ENCODE measurements at regions of chr5 and their contacts with region 1.

Region 1: DNA sequence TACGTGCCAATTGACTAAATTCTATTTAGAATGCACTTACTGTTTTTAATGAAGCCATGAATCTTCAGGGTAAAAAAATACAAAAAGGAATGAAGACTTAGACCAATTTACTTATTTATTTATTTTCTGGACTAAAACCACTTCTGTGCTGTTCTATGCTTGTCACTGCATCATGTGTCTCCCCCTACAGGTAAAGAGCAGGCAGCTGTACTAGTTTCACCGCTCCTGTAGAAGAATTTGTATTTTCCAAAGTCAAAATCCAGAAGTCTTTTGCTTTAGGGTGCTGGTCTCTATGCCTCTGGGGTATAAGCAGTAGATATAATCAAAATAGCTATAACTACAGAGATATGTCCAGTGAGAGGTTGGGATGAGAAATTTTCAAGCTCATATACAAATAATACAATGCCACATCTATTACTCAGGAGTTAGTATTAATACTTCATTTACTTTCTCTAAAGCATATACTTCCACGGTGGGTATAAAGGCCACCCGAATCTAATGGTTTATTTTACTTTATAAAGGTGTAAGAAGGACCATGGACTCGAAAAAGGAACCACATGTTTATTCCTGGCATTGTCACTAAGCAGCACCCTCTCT is 591.5 kb downstream of the RAB3C start:
- DNase-seq: no peak
- ATAC-seq: peak; percentile 76 to 91
- H3K4me3 ChIP-seq: no peak overlapping the region
- H3K27ac ChIP-seq: no peak overlapping the region
- H3K4me1 ChIP-seq: no peaks in the 10 kb centered on the region
- H3K27me3 ChIP-seq: no peaks in the 10 kb centered on the region
- CTCF ChIP-seq: peak; percentile 75

Region 2: DNA sequence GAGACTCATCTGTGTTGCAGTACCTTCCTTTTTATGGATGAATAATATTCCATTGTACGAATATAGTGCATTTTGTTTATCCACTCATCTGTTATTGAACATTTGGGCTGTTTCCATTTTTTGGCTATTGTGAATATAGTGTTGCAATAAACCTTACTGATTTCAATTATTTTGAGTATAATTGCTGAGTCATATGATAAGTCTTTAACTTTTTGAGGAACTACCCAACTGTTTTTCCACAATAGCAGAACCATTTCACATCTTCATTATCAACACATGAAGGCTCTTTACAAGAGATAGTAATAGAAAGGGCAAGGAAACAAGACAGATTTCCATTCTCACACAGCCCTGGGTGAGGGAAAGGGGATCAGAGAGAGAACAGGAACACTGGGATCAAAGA is 262.2 kb before region 1 on chr5:
- intact Hi-C with region 1: no loop called
- DNase-seq: no peak
- ATAC-seq: no peak
- H3K4me3 ChIP-seq: no peak overlapping the region
- H3K27ac ChIP-seq: no peak overlapping the region
- H3K4me1 ChIP-seq: no peaks in the 10 kb centered on the region
- H3K27me3 ChIP-seq: no peaks in the 10 kb centered on the region
- CTCF ChIP-seq: no peak

Region 3: DNA sequence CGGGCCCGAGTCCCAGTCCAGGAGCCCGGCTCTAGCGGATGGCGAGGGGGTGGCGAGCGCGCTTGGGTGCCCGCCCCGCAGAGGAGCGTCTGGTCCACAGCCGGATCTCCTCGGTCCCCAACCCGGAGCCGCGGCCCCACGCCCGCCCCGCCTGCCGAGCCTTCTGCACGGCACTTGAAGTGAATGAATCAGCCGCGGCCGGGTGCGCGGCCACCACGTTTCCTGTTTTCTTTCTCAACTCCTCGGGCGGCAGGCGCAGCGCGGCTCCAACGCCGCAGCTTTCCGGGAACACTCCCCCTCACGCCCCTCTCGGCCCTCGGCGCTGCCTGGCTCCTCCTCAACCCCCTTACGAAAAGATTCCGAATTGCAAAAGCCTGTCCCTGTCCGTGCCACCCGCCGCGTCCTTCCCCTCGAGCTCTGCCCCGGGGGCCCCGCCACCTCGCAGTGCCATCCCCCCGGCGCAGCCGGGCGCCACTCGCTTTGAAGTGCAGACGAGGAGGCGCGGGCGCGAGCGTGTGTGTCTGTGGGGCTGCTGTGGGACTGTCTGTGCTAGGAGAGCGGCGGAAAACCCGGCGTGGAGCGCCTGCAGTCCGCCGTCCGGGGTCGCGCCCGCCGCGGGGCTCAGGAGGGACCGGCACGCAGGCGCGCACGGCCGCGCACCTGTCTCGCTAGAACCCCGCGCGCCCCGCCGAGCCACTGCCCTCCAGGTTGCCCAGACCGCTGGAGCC is 134.9 kb before region 1 on chr5:
- intact Hi-C with region 1: loop called (anchors 10 kb)
- DNase-seq: peak; percentile 95
- ATAC-seq: peak; percentile 84 to 90
- H3K4me3 ChIP-seq: peak overlapping the region; percentile 67
- H3K27ac ChIP-seq: peak overlapping the region; percentile 83
- H3K4me1 ChIP-seq: peaks cover 33% of the 10 kb centered on the region
- H3K27me3 ChIP-seq: no peaks in the 10 kb centered on the region
- CTCF ChIP-seq: no peak

Region 4: DNA sequence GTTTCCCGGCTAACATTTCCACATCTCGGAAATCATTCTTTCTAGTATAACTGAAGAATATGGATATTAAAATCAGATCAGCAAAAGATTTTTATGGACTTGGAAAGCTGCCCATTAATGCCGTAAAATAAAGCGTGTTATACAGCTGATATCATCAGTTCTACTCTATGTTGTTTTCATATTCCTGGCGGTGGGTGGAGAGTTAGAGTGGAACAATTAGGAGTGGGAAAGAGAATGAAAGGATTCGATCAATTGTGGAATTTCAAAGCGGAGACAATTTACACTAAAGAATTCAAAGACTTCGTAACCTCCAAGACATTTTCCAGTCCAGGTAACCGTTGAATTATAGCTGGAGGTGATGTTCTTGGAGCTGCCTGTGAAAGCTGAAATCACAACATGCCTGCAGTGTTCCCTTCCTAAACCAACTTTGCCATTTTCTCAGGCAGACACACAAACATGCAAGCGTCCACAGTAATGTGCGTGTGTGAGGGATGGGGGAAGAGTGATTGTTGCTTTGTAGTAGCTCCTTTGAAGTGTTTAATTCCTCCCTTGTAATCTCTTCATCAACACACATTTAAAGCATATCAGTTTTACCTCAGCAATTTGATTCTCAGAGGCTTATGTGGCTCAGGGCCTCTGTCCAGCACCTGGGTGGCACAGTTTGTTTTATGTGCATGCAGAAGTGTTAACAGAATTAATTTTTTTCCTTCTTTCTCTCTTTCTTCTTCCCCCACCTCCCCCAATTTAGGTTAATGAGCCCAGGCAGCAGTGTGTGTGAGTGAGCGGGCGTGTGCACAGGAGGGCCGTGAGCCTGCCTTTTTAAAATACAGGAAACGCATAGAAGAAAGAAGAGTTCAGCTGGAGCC is 47.4 kb before region 1 on chr5:
- intact Hi-C with region 1: no loop called
- DNase-seq: no peak
- ATAC-seq: peak; percentile 6 to 46
- H3K4me3 ChIP-seq: peak overlapping the region; percentile 33
- H3K27ac ChIP-seq: peak overlapping the region; percentile 83
- H3K4me1 ChIP-seq: peaks cover 41% of the 10 kb centered on the region
- H3K27me3 ChIP-seq: no peaks in the 10 kb centered on the region
- CTCF ChIP-seq: no peak

Measured in lower lobe of right lung (tissue), 2 donors.